Activated T-helper 1 cell treated with anti-CD3 and anti-CD28 coated beads, Interleukin-12 subunit alpha, Interleukin-12 subunit beta, Interleukin-2, Interleukin-4 antibody, amounts not matched to agents 30 ng/mL and 10 ng/mL and 1 ng/mL, durations not matched to agents 14 hours and 24 hours and 36 hours (primary cell): ENCODE measurements at regions of chr21 and their contacts with region 1.

Region 1: DNA sequence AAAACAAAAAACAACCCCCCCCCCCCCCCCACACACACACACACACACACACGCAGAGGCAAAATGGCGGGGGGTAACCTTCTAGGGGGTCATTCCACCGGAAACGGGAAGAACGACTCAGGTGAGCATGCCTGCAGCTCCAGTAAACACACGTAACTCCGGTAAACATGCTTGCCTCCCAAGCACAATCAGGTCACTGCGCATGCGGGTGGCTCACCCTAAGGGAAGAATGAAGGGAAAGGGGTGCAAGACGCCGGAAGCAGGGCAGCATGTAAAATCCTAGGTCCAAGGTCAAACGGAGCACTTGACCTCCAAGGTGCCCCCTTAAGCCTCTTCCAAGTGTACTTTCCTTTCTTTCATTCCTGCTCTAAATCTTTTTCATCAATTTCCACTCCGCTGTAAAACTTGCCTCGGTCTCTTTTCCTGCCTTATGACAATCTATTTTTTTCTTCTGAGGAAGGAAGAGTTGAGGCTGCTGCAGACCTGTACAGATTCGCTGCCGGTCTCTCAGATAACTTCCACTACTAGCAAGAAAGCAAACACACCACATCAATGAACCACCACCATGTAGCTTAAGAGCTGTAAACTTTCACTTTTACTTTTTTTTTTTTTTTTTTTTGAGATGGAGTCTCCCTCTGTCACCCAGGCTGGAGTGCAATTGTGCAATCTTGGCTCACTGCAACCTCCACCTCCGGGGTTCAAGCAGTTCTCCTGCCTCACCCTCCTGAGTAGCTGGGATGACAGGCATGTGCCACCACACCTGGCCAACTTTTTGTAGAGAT is 21.0 kb upstream of the CBR3 start:
- DNase-seq: peak; percentile 36
- H3K4me3 Mint-ChIP-seq: peak overlapping the region; percentile 84
- H3K27ac Mint-ChIP-seq: peak overlapping the region; percentile 89
- H3K4me1 Mint-ChIP-seq: peaks cover 16% of the 10 kb centered on the region
- H3K27me3 Mint-ChIP-seq: peaks cover 10% of the 10 kb centered on the region

Region 2: GRCh38 chr21:34639882-34640788 is 1473.7 kb before region 1 on chr21:
- intact Hi-C with region 1: loop called (anchors 1 kb)
- DNase-seq: peak; percentile 16
- H3K4me3 Mint-ChIP-seq: peak overlapping the region; percentile 73
- H3K27ac Mint-ChIP-seq: peak overlapping the region; percentile 79
- H3K4me1 Mint-ChIP-seq: peaks cover 37% of the 10 kb centered on the region
- H3K27me3 Mint-ChIP-seq: peaks cover 11% of the 10 kb centered on the region

Region 3: GRCh38 chr21:34693192-34693810 is 1420.5 kb before region 1 on chr21:
- intact Hi-C with region 1: loop called (anchors 10 kb)
- DNase-seq: peak; percentile 22
- H3K4me3 Mint-ChIP-seq: no peak overlapping the region
- H3K27ac Mint-ChIP-seq: no peak overlapping the region
- H3K4me1 Mint-ChIP-seq: peaks cover 12% of the 10 kb centered on the region
- H3K27me3 Mint-ChIP-seq: peaks cover 35% of the 10 kb centered on the region

Region 4: GRCh38 chr21:35840197-35840799 is 273.5 kb before region 1 on chr21:
- intact Hi-C with region 1: loop called (anchors 10 kb)
- DNase-seq: peak; percentile 28
- H3K4me3 Mint-ChIP-seq: no peak overlapping the region
- H3K27ac Mint-ChIP-seq: no peak overlapping the region
- H3K4me1 Mint-ChIP-seq: no peaks in the 10 kb centered on the region
- H3K27me3 Mint-ChIP-seq: peaks cover 7% of the 10 kb centered on the region

Region 5: GRCh38 chr21:35932232-35932911 is 181.5 kb before region 1 on chr21:
- intact Hi-C with region 1: loop called (anchors 5 kb)
- DNase-seq: no peak
- H3K4me3 Mint-ChIP-seq: no peak overlapping the region
- H3K27ac Mint-ChIP-seq: no peak overlapping the region
- H3K4me1 Mint-ChIP-seq: no peaks in the 10 kb centered on the region
- H3K27me3 Mint-ChIP-seq: peaks cover 2% of the 10 kb centered on the region

Region 6: GRCh38 chr21:36060159-36060921 is 53.5 kb before region 1 on chr21 and contains the start of gene SETD4:
- intact Hi-C with region 1: loop called (anchors 1 kb)
- DNase-seq: peak; percentile 91
- H3K4me3 Mint-ChIP-seq: peak within 1 kb of the TSS; percentile 93
- H3K27ac Mint-ChIP-seq: peak within 1 kb of the TSS; percentile 98
- H3K4me1 Mint-ChIP-seq: peaks cover 23% of the 10 kb centered on the region
- H3K27me3 Mint-ChIP-seq: peaks cover 3% of the 10 kb centered on the region
- total RNA-seq, gene SETD4: 21.9 and 22.0 TPM in 2 replicates

Region 7: DNA sequence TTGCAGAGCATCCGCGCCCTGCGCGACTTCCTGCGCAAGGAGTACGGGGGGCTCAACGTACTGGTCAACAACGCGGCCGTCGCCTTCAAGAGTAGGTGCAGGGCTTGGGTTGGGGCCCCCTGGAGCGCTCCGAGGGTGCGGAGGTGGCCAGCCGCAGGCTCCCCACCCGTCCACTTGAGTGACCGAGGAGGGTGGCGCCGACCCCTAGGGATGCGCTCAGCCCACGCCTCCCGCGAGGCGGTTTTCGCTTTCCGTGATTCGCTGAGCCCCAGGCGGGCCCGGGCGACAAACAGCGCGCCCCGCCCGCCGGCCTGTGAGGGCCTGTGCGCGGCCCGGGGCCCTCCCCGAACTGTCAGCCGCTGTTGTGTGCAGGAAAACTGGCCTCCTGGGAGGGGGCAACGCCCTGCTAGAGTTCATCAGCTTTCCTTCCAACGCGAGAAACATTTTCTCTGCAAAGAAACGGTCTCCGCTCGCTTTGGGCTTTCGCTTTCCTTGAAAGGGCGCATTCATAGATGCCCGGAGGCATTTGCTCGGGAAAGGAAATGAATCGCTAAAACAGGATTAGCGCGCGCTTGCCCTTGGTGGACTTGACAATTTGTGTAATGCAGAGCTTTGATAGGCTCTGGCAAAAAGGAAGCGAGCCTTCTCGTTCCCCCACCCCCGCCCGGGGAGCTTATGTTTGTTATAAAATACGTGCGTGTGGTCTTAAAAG is 21.7 kb after region 1 on chr21:
- intact Hi-C with region 1: loop called (anchors 2 kb)
- DNase-seq: peak; percentile 68
- H3K4me3 Mint-ChIP-seq: peak overlapping the region; percentile 94
- H3K27ac Mint-ChIP-seq: peak overlapping the region; percentile 94
- H3K4me1 Mint-ChIP-seq: peaks cover 22% of the 10 kb centered on the region
- H3K27me3 Mint-ChIP-seq: peaks cover 5% of the 10 kb centered on the region

Region 8: GRCh38 chr21:36260030-36260787 is 146.4 kb after region 1 on chr21:
- intact Hi-C with region 1: no loop called
- DNase-seq: peak; percentile 31
- H3K4me3 Mint-ChIP-seq: peak overlapping the region; percentile 70
- H3K27ac Mint-ChIP-seq: peak overlapping the region; percentile 53
- H3K4me1 Mint-ChIP-seq: peaks cover 19% of the 10 kb centered on the region
- H3K27me3 Mint-ChIP-seq: no peaks in the 10 kb centered on the region